ENCODE measurements at regions of chr7 and their contacts with region 1.

Region 1: GRCh38 chr7:7681179-7681935 is 37.0 kb downstream of the RPA3 start:
- DNase-seq: no peak
- ATAC-seq: peak; percentile 88

Region 2: DNA sequence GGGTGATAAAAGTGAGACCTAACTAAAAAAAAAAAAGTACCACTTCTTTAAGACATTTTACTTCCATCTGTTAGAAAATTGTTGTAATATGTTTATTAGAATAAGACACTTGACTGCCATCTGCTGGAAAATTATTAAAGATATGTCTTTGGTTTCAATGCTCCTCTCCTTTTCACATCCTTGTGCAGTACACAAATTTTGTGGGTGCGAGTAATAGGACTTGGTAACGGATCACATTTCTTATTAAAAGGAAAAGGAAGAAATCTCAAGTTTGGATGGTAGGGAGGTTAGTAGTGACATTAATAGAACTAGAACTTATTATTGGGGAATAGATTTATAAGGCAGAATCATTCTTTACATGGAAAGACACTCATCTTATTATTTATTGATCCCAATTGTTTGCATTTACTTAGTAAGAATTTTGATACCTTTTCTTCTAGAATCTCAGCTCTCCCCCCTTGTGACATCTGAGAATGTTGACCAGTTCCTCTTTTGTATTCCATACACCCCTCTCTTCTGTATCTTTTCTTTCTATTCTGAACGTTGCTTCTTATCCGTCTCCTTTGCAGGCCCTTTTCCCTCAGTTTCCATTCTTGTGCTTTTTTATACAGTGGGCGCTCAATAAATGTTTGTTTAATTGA is 80.1 kb after region 1 on chr7:
- intact Hi-C with region 1: loop called (anchors 5 kb)
- DNase-seq: no peak
- ATAC-seq: peak; percentile 74